Activated CD4-positive, alpha-beta T cell treated with anti-CD3 and anti-CD28 coated beads for 36 hours (primary cell): ENCODE measurements at regions of chr22 and their contacts with region 1.

Region 1: DNA sequence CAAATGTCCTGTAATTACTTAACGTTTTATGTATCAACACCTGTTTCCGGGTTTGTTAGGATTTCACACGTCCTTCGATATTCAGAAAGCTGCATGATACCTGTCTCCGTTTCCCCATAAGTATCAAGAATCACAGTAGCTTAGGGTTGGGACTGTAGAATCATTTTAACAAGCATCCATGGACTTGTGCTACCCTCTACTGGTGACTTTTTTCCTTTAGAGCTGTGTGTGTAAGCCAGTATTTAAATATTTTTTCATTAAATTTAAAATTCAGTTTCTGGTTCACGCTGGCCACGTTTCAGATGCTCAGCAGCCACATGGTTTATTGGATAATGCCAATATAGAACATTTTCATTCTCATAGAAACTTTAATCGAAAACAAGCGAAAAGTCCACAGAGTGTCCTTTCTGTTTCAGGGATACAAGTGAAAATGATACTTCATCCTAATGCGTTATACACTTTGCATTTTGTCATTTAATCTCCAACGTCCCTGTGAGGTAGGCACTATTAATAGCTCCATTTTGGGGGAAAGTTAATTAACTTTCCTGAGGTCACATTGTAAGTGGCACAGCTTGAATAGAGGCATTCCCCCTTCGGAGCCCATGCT is 61.5 kb upstream of the SLC25A18 start:
- DNase-seq: peak; percentile 20
- ATAC-seq: peak; percentile 63
- H3K4me3 Mint-ChIP-seq: no peak overlapping the region
- H3K27ac Mint-ChIP-seq: no peak overlapping the region
- H3K4me1 Mint-ChIP-seq: no peaks in the 10 kb centered on the region
- H3K27me3 Mint-ChIP-seq: peaks cover 6% of the 10 kb centered on the region

Region 2: GRCh38 chr22:16917144-16918003 is 584.4 kb before region 1 on chr22:
- CTCF ChIA-PET with region 1: interaction called, 6 read pairs
- POLR2A ChIA-PET with region 1: no interaction called
- intact Hi-C with region 1: loop called in 1 of 2 experiments (anchors 2 kb)
- DNase-seq: peak; percentile 80
- ATAC-seq: peak; percentile 44
- H3K4me3 Mint-ChIP-seq: no peak overlapping the region
- H3K27ac Mint-ChIP-seq: no peak overlapping the region
- H3K4me1 Mint-ChIP-seq: peaks cover 2% of the 10 kb centered on the region
- H3K27me3 Mint-ChIP-seq: peaks cover 20% of the 10 kb centered on the region

Region 3: DNA sequence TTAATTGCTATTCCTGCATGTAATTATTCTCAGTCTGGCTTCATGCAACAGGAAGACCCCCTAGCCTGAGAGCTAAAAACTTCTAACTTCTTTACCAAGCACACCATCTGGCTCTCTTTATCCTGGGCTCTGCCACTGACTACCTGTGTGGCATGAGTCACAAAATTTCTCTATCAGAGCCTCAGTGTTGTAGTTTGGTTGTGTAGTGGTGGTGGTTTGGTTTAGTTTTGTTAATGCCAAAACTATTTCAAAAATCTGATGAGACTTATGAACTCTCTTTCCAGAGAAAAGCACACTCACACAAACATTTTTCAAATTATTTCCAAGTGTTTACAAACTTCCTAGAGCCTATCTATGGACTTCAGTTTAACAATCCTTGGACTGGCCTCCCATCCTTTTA is 424.5 kb before region 1 on chr22:
- CTCF ChIA-PET with region 1: interaction called, 27 read pairs
- POLR2A ChIA-PET with region 1: no interaction called
- intact Hi-C with region 1: loop called (anchors 1 kb)
- DNase-seq: no peak
- ATAC-seq: no peak
- H3K4me3 Mint-ChIP-seq: no peak overlapping the region
- H3K27ac Mint-ChIP-seq: no peak overlapping the region
- H3K4me1 Mint-ChIP-seq: peaks cover 24% of the 10 kb centered on the region
- H3K27me3 Mint-ChIP-seq: no peaks in the 10 kb centered on the region

Region 4: DNA sequence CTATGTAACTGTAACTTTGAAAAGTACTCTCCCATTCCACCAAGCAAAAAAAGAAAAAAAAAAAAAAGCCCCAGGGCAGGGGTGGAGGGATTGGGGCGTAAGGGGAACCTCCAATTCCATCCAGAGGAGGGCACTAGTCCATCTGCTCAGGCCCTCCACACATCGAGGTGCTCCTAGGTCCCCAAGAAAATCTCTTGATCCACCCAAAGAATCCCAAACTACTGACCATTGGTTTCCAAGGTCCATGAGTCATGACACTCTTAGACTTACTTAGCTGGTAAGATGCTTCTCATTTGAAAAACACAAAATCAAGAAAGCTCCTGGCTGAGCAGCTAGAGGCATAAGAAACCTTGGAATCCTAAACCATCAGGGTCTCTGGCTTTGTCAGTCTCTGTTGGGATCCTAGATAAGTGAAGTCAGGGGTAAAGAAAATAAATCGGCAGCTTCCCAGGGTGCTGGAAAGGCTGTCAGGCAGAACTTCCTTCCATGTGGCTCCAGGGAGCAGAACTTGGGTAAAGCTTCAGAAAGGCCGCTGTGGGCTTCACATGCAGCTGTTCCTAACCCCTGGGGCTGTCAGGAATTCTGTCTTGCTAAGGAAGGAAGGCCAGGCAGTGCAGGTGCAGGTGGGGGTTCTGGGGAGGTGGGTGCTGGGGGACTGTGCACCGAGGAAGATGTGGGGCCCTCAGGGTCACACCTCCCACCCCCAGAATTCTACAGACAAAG is 233.1 kb before region 1 on chr22:
- CTCF ChIA-PET with region 1: interaction called, 4 read pairs
- POLR2A ChIA-PET with region 1: no interaction called
- intact Hi-C with region 1: loop called in 1 of 2 experiments (anchors 1 kb)
- DNase-seq: no peak
- ATAC-seq: peak; percentile 59
- H3K4me3 Mint-ChIP-seq: no peak overlapping the region
- H3K27ac Mint-ChIP-seq: no peak overlapping the region
- H3K4me1 Mint-ChIP-seq: peaks cover 18% of the 10 kb centered on the region
- H3K27me3 Mint-ChIP-seq: no peaks in the 10 kb centered on the region

Region 5: GRCh38 chr22:17587629-17588028 is 85.8 kb after region 1 on chr22:
- CTCF ChIA-PET with region 1: no interaction called
- POLR2A ChIA-PET with region 1: no interaction called
- intact Hi-C with region 1: no loop called
- DNase-seq: no peak
- ATAC-seq: no peak
- H3K4me3 Mint-ChIP-seq: no peak overlapping the region
- H3K27ac Mint-ChIP-seq: no peak overlapping the region
- H3K4me1 Mint-ChIP-seq: no peaks in the 10 kb centered on the region
- H3K27me3 Mint-ChIP-seq: no peaks in the 10 kb centered on the region

Region 6: DNA sequence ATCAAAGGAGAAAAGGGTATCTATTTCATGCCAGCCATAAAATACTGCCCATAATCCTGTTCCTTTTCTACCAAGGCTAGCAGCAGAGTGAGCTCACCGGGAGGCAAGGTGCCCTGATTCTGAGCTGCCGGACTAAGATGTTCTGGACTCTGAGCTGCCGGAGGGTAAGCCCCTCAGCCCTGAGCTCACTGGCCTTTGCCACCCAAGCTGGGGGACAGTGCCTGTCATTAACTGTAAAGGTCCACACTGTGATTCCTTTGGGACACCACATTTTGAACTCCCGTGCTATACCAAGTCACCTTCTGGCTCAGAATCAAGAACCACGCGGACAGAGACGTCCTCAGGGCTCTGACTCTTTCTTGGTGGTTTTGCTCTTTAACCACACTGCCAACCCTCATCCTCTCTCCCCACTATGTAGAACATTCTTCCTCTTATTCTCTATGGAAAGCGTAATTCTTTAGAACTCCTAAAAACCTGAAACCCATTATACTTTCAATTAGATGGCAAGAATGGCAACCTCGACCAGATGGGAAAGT is 360.9 kb after region 1 on chr22:
- CTCF ChIA-PET with region 1: no interaction called
- POLR2A ChIA-PET with region 1: no interaction called
- intact Hi-C with region 1: no loop called
- DNase-seq: no peak
- ATAC-seq: no peak
- H3K4me3 Mint-ChIP-seq: no peak overlapping the region
- H3K27ac Mint-ChIP-seq: no peak overlapping the region
- H3K4me1 Mint-ChIP-seq: no peaks in the 10 kb centered on the region
- H3K27me3 Mint-ChIP-seq: no peaks in the 10 kb centered on the region

Region 7: GRCh38 chr22:18088825-18089568 is 587.2 kb after region 1 on chr22:
- CTCF ChIA-PET with region 1: no interaction called
- POLR2A ChIA-PET with region 1: no interaction called
- intact Hi-C with region 1: no loop called
- DNase-seq: peak; percentile 60
- ATAC-seq: no peak
- H3K4me3 Mint-ChIP-seq: no peak overlapping the region
- H3K27ac Mint-ChIP-seq: peak overlapping the region; percentile 72
- H3K4me1 Mint-ChIP-seq: peaks cover 40% of the 10 kb centered on the region
- H3K27me3 Mint-ChIP-seq: no peaks in the 10 kb centered on the region